A549 (cell line): ENCODE measurements at regions of chr20 and their contacts with region 1.

Region 1: DNA sequence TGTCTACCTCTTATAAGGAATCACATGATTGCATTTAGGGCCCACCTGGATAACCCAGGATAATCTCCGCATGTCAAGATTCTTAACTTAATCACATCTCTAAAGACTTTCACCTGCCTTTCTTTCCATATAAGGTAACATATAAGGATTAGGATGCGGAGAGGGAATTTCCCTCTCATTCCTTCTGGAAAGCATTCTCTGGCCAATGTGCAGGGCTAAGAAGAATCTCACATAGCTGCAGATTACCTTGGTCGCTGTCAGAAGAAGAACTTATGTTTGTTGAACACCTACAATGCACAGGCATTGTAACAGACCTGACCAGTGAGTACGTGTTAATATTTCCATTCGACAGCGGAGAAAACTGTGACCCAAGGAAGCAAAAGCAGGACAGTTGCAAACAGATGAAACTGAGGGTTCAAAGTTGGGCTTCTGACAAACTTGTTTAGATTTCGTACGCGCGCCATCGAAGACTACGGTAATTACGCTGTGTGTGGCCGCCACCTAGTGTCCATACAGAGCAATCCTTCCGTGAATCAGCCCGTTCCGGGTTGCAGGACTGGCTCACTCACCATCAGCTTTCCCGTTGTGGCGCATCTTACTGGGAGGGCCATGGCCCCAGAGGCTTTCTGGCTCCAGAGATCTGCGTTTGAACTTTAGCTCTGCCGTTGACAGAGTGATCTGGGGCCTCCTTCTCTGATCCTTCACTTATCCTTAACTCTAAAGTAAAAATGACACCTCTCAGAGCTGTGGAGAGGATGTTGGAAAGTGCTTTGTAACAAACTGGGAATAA is 9.5 kb downstream of the C20orf202 start:
- DNase-seq: peak; percentile 82 to 83
- ATAC-seq: peak; percentile 96 to 99
- H3K4me3 ChIP-seq: no peak overlapping the region
- H3K27ac ChIP-seq: no peak overlapping the region
- H3K4me1 ChIP-seq: no peaks in the 10 kb centered on the region
- CTCF ChIP-seq: peak; percentile 92
- EP300 ChIP-seq: no peak
- POLR2A ChIP-seq: no peak
- RAD21 ChIP-seq: peak; percentile 89 to 91

Region 2: DNA sequence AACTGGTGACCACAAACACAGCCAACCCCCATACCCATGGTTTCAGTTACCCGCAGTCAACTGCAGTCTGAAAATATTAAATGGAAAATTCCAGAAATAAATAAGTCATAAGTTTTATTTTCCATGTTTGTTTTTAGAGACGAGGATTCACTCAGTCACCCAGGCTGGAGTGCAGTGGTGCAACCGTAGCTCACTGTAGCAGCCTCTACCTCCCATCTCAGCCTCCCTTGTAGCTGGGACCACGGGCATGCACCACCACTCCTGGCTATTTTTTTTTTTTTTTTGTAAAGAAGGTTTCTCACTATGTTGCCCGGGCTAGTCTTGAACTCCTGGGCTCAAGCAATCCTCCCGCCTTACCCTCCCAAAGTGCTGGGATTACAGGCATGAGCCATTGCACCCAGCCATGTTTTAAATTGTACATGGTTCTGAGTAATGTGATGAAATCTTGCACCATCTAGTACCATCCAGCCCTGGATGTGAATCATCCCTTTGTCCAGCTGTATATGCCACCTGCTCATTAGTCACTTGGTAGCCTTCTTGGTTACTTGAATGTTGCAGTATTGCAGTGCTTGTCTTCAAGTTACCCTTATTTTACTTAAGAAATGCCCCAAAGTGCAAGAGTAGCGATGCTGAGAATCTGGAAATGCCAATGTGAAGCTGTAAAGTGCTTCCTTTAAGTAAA is 683.7 kb before region 1 on chr20:
- CTCF ChIA-PET with region 1: no interaction called
- POLR2A ChIA-PET with region 1: no interaction called
- DNase-seq: peak; percentile 58 to 65
- ATAC-seq: peak; percentile 75 to 96
- H3K4me3 ChIP-seq: no peak overlapping the region
- H3K27ac ChIP-seq: peak overlapping the region; percentile 82
- H3K4me1 ChIP-seq: peaks cover 59% of the 10 kb centered on the region
- CTCF ChIP-seq: no peak
- EP300 ChIP-seq: peak; percentile 46 to 50; a peak in 2 of 5 replicates
- POLR2A ChIP-seq: no peak
- RAD21 ChIP-seq: no peak

Region 3: DNA sequence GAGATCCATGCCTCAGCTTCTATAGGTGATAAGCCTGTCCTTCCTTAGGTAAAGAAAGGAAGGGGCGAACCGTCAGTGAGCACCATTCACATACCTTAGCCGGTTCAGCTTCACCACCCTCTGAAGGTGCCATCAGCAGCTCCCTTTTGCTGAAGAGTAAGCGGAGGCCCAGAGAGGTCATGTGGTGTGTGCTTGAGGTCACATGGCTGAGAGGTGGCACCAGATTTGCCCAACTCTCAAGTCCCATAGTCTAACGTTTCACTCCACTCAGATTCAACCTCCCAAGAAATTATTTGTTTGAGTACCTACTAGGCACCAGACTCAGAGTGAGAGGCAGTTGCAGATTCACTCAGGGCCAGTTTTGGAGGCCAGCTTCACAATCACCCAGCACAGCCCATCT is 192.2 kb before region 1 on chr20:
- CTCF ChIA-PET with region 1: no interaction called
- POLR2A ChIA-PET with region 1: no interaction called
- DNase-seq: no peak
- ATAC-seq: no peak
- H3K4me3 ChIP-seq: no peak overlapping the region
- H3K27ac ChIP-seq: no peak overlapping the region
- H3K4me1 ChIP-seq: no peaks in the 10 kb centered on the region
- CTCF ChIP-seq: no peak
- EP300 ChIP-seq: no peak
- POLR2A ChIP-seq: no peak
- RAD21 ChIP-seq: no peak

Region 4: DNA sequence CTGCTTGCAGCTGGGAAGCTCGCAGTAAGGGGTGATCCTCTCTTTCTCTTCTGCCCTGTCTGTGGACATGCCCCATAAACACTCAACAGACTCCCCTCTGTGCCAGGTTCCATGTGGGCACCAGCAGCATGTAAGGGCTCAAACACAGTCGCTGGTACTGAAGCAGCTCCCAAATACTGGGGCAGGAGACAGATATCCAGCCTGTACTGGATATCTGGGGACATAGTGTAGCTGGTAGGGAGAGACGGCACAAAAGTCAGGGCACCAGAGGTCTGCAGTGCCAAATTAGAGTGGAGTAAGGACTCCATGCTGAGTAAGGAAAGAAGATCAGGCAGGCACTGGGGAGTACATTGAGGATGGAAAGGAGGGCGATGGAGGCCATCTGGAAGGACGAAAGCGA is 162.4 kb before region 1 on chr20:
- CTCF ChIA-PET with region 1: no interaction called
- POLR2A ChIA-PET with region 1: no interaction called
- DNase-seq: no peak
- ATAC-seq: no peak
- H3K4me3 ChIP-seq: no peak overlapping the region
- H3K27ac ChIP-seq: no peak overlapping the region
- H3K4me1 ChIP-seq: no peaks in the 10 kb centered on the region
- CTCF ChIP-seq: no peak
- EP300 ChIP-seq: no peak
- POLR2A ChIP-seq: no peak
- RAD21 ChIP-seq: no peak

Region 5: GRCh38 chr20:1177680-1178079 is 35.1 kb before region 1 on chr20:
- CTCF ChIA-PET with region 1: interaction called, 30 read pairs
- POLR2A ChIA-PET with region 1: no interaction called
- DNase-seq: peak in 1 of 2 experiments; percentile 53
- ATAC-seq: peak; percentile 45 to 80; a peak in 5 of 6 replicates
- H3K4me3 ChIP-seq: no peak overlapping the region
- H3K27ac ChIP-seq: no peak overlapping the region
- H3K4me1 ChIP-seq: peaks cover 7% of the 10 kb centered on the region; the same call in 1 of the 3 replicates
- CTCF ChIP-seq: peak; percentile 5; the same call in 1 of the 3 replicates
- EP300 ChIP-seq: no peak
- POLR2A ChIP-seq: no peak
- RAD21 ChIP-seq: peak in 1 of 2 experiments; percentile 34; a peak in 2 of 5 replicates

Region 6: GRCh38 chr20:1191299-1191698 is 21.5 kb before region 1 on chr20:
- CTCF ChIA-PET with region 1: interaction called, 12 read pairs
- POLR2A ChIA-PET with region 1: no interaction called
- DNase-seq: no peak
- ATAC-seq: no peak
- H3K4me3 ChIP-seq: no peak overlapping the region
- H3K27ac ChIP-seq: no peak overlapping the region
- H3K4me1 ChIP-seq: peaks cover 11% of the 10 kb centered on the region
- CTCF ChIP-seq: no peak
- EP300 ChIP-seq: no peak
- POLR2A ChIP-seq: no peak
- RAD21 ChIP-seq: no peak

Region 7: GRCh38 chr20:1375515-1375914 is 162.7 kb after region 1 on chr20:
- CTCF ChIA-PET with region 1: no interaction called
- POLR2A ChIA-PET with region 1: no interaction called
- DNase-seq: no peak
- ATAC-seq: peak; percentile 32 to 54; a peak in 3 of 6 replicates
- H3K4me3 ChIP-seq: no peak overlapping the region
- H3K27ac ChIP-seq: no peak overlapping the region
- H3K4me1 ChIP-seq: peaks cover 16% of the 10 kb centered on the region; the same call in 2 of the 3 replicates
- CTCF ChIP-seq: no peak
- EP300 ChIP-seq: no peak
- POLR2A ChIP-seq: no peak
- RAD21 ChIP-seq: no peak